ENCODE measurements at regions of chr7 and their contacts with region 1.

Region 1: DNA sequence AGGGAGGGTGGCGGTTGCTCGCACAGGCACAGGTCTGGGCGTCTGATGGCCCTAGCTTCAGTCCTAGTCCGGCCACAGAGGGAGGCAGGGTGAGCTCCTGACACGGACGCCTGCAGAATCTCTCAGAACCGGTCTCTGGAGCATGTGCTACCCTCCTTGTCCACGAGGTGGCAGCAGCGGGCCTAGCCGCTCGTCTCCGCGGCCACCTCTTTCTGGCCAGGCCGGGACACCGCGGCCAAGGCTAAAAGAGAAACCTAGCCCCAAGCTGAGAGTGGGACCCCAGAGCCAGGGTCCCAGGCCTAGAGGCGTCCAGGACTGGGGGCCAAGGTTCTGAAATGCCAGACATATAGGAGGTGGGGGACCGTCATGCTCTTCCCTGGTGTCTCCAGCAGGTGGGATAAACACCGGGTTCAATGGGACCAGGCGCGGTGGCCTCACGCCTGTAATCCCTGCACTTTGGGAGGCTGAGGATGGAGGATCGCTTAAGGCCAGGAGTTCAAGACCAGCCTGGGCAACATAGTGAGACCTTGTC is 3.2 kb upstream of the LAT2 start:
- DNase-seq: peak; percentile 82 to 93
- H3K4me3 ChIP-seq: no peak overlapping the region
- H3K4me3 Mint-ChIP-seq: no peak overlapping the region
- H3K27ac Mint-ChIP-seq: no peak overlapping the region
- H3K4me1 ChIP-seq: no peaks in the 10 kb centered on the region
- H3K4me1 Mint-ChIP-seq: no peaks in the 10 kb centered on the region
- H3K27me3 ChIP-seq: no peaks in the 10 kb centered on the region
- H3K27me3 Mint-ChIP-seq: peaks cover 6% of the 10 kb centered on the region
- CTCF ChIP-seq: peak; percentile 95 to 97

Region 2: DNA sequence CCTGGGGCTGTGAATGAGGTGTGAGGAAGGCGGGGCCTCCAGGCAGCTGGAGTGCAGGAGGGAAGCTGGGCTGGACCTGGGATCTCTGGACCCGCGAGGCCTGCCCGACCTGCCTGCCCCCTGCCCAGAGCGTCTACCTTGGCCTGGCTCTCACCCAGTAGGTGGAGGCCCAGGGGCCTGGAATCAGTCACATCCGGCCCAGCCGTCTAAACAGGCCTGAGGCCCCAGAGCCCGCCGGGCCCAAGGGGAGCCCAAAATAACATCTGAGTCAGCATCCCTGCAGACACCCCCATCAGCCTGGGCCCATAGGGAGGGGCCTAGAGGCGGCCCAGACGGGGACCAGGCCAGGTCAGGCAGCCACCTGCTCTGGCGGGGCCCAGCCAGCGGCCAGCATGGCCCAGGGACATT is 193.8 kb before region 1 on chr7:
- CTCF ChIA-PET with region 1: no interaction called
- POLR2A ChIA-PET with region 1: no interaction called
- intact Hi-C with region 1: no loop called
- DNase-seq: no peak
- H3K4me3 ChIP-seq: no peak overlapping the region
- H3K4me3 Mint-ChIP-seq: no peak overlapping the region
- H3K27ac Mint-ChIP-seq: no peak overlapping the region
- H3K4me1 ChIP-seq: no peaks in the 10 kb centered on the region
- H3K4me1 Mint-ChIP-seq: no peaks in the 10 kb centered on the region
- H3K27me3 ChIP-seq: no peaks in the 10 kb centered on the region
- H3K27me3 Mint-ChIP-seq: peaks cover 4% of the 10 kb centered on the region
- CTCF ChIP-seq: no peak

Region 3: DNA sequence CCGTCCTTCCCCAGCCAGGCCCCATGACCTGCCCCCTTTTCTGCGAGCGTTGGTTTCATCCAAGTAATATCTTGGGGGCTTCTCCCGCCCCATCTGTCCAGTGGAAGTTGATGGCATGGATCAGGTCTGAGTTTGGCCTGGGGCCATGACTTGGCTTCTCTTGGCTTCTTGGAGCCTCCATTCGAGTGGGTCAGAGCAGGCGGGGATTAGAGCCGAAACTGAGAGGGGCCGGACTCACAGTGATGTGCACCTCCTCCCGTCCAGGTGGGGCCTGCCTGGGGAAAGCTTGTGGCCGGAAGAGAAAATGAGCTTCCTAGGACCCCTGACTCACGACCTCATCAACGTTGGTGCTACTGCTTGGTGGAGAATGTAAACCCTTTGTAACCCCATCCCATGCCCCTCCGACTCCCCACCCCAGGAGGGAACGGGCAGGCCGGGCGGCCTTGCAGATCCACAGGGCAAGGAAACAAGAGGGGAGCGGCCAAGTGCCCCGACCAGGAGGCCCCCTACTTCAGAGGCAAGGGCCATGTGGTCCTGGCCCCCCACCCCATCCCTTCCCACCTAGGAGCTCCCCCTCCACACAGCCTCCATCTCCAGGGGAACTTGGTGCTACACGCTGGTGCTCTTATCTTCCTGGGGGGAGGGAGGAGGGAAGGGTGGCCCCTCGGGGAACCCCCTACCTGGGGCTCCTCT is 138.1 kb before region 1 on chr7:
- CTCF ChIA-PET with region 1: interaction called, 6 read pairs
- POLR2A ChIA-PET with region 1: no interaction called
- intact Hi-C with region 1: loop called (anchors 1 kb)
- DNase-seq: no peak
- H3K4me3 ChIP-seq: no peak overlapping the region
- H3K4me3 Mint-ChIP-seq: no peak overlapping the region
- H3K27ac Mint-ChIP-seq: no peak overlapping the region
- H3K4me1 ChIP-seq: no peaks in the 10 kb centered on the region
- H3K4me1 Mint-ChIP-seq: no peaks in the 10 kb centered on the region
- H3K27me3 ChIP-seq: no peaks in the 10 kb centered on the region
- H3K27me3 Mint-ChIP-seq: no peaks in the 10 kb centered on the region
- CTCF ChIP-seq: no peak

Region 4: DNA sequence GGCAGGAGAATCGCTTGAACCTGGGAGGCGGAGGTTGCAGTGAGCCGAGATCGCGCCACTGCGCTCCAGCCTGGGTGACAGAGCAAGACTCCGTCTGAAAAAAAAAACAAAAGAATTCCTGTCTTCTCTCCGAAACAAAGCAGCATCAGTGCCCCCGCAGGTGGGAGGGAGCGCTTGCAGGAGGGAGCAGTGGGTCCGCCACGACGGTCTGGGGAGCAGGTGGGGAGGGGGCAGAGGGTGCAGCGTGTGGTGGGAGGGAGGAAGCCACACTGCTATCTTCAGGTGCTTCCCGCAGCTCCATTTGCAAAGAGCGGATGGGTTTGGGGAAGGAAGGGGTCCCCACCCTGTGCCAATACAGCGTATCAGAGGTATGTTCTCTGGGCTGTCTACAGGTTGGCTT is 91.3 kb before region 1 on chr7:
- CTCF ChIA-PET with region 1: no interaction called
- POLR2A ChIA-PET with region 1: no interaction called
- intact Hi-C with region 1: no loop called
- DNase-seq: peak in 1 of 2 experiments; percentile 29
- H3K4me3 ChIP-seq: no peak overlapping the region
- H3K4me3 Mint-ChIP-seq: no peak overlapping the region
- H3K27ac Mint-ChIP-seq: no peak overlapping the region
- H3K4me1 ChIP-seq: no peaks in the 10 kb centered on the region
- H3K4me1 Mint-ChIP-seq: no peaks in the 10 kb centered on the region
- H3K27me3 ChIP-seq: no peaks in the 10 kb centered on the region
- H3K27me3 Mint-ChIP-seq: no peaks in the 10 kb centered on the region
- CTCF ChIP-seq: peak in 1 of 2 experiments; percentile 9

Region 5: DNA sequence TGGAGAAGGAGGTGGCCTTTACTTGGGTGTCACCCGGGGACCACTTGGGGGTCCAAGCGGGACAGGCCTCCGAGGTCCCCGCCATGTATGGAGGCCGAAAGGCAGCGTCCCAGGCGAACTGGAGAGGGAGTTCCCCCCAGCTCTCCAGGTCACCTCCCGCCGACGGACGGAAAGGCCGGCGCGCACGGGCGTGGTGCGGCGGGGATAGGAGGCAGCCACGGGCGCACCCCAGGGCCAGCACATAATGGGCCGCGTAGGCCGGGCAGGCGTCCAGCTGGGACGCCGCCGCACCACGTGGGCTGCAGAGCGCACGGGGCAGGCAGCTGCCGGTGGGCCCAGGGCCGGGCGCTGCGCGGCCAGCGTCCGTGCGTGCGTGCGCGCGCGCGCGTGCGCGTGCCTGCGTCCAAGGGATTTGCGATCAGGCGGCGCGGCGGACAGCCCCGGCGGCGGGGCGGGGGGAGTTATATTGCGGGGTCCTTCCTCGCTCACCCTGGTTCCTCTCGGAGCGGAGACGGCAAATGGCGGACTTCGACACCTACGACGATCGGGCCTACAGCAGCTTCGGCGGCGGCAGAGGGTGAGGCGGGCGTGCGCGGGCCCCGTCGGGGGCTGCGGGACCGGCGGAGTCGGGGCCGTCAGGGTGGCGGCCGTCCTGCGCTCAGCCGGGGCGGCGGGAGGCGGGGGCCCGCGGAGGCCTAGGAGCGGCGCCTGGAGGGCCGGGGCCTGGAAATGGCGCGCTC is 32.6 kb before region 1 on chr7 and contains the start of gene EIF4H:
- CTCF ChIA-PET with region 1: interaction called, 10 read pairs
- POLR2A ChIA-PET with region 1: no interaction called
- intact Hi-C with region 1: loop called (anchors 2 kb)
- DNase-seq: peak; percentile 93 to 97
- H3K4me3 ChIP-seq: peak within 1 kb of the TSS; percentile 99
- H3K4me3 Mint-ChIP-seq: peak within 1 kb of the TSS; percentile 94
- H3K27ac Mint-ChIP-seq: peak within 1 kb of the TSS; percentile 90
- H3K4me1 ChIP-seq: peaks cover 13% of the 10 kb centered on the region; the same call in 1 of the 2 replicates
- H3K4me1 Mint-ChIP-seq: peaks cover 17% of the 10 kb centered on the region
- H3K27me3 ChIP-seq: no peaks in the 10 kb centered on the region
- H3K27me3 Mint-ChIP-seq: no peaks in the 10 kb centered on the region
- CTCF ChIP-seq: no peak
- total RNA-seq, gene EIF4H: 370 TPM in 2 replicates

Region 6: GRCh38 chr7:74193054-74193453 is 13.6 kb before region 1 on chr7:
- CTCF ChIA-PET with region 1: interaction called, 10 read pairs
- POLR2A ChIA-PET with region 1: interaction called, 10 read pairs
- intact Hi-C with region 1: no loop called
- DNase-seq: no peak
- H3K4me3 ChIP-seq: no peak overlapping the region
- H3K4me3 Mint-ChIP-seq: no peak overlapping the region
- H3K27ac Mint-ChIP-seq: no peak overlapping the region
- H3K4me1 ChIP-seq: no peaks in the 10 kb centered on the region
- H3K4me1 Mint-ChIP-seq: no peaks in the 10 kb centered on the region
- H3K27me3 ChIP-seq: no peaks in the 10 kb centered on the region
- H3K27me3 Mint-ChIP-seq: no peaks in the 10 kb centered on the region
- CTCF ChIP-seq: no peak

Region 7: DNA sequence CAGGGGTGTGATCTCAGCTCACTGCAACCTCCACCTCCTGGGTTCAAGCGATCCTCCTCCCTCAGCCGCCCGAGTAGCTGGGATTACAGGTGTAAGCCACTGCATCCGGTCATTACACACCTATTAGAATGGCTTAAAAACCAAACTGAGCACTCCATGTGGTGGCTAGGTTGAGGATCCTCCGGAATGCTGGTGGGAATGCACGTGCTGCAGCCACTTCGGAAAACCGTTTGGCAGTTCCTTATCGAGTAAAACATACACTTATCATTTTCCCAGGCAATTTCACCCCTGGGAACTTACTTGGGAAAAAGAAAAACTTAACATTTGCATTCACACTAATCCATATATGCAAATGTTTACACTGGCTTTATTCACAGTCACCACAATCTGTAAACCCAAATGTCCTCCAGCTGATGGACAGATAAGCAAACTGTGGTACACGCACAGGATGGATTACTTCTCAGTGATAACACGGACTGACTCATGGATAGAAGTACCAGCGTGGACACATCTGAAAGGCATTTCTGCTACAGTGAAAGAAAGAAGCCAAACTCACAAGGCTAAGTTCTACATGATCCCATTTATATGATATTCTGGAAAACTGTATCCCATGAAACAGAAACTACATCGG is 27.1 kb after region 1 on chr7:
- CTCF ChIA-PET with region 1: interaction called, 3 read pairs
- POLR2A ChIA-PET with region 1: no interaction called
- intact Hi-C with region 1: loop called (anchors 1 kb)
- DNase-seq: no peak
- H3K4me3 ChIP-seq: no peak overlapping the region
- H3K4me3 Mint-ChIP-seq: no peak overlapping the region
- H3K27ac Mint-ChIP-seq: no peak overlapping the region
- H3K4me1 ChIP-seq: no peaks in the 10 kb centered on the region; the same call in 1 of the 2 replicates
- H3K4me1 Mint-ChIP-seq: peaks cover 11% of the 10 kb centered on the region
- H3K27me3 ChIP-seq: no peaks in the 10 kb centered on the region
- H3K27me3 Mint-ChIP-seq: no peaks in the 10 kb centered on the region
- CTCF ChIP-seq: no peak

Region 8: GRCh38 chr7:74289018-74289658 is 82.5 kb after region 1 on chr7 and contains the start of gene CLIP2:
- CTCF ChIA-PET with region 1: interaction called, 10 read pairs
- POLR2A ChIA-PET with region 1: no interaction called
- intact Hi-C with region 1: no loop called
- DNase-seq: peak; percentile 80 to 84
- H3K4me3 ChIP-seq: peak within 1 kb of the TSS; percentile 76
- H3K4me3 Mint-ChIP-seq: peak within 1 kb of the TSS; percentile 71
- H3K27ac Mint-ChIP-seq: peak within 1 kb of the TSS; percentile 38
- H3K4me1 ChIP-seq: peaks cover 56% of the 10 kb centered on the region
- H3K4me1 Mint-ChIP-seq: peaks cover 23% of the 10 kb centered on the region
- H3K27me3 ChIP-seq: no peaks in the 10 kb centered on the region
- H3K27me3 Mint-ChIP-seq: no peaks in the 10 kb centered on the region
- CTCF ChIP-seq: no peak
- total RNA-seq, gene CLIP2: 19.5 and 23.5 TPM in 2 replicates

Region 9: GRCh38 chr7:74401137-74401859 is 194.6 kb after region 1 on chr7:
- CTCF ChIA-PET with region 1: interaction called, 76 read pairs
- POLR2A ChIA-PET with region 1: interaction called, 3 read pairs
- intact Hi-C with region 1: loop called (anchors 1 kb)
- DNase-seq: peak; percentile 76 to 83
- H3K4me3 ChIP-seq: no peak overlapping the region
- H3K4me3 Mint-ChIP-seq: no peak overlapping the region
- H3K27ac Mint-ChIP-seq: no peak overlapping the region
- H3K4me1 ChIP-seq: no peaks in the 10 kb centered on the region
- H3K4me1 Mint-ChIP-seq: no peaks in the 10 kb centered on the region
- H3K27me3 ChIP-seq: no peaks in the 10 kb centered on the region
- H3K27me3 Mint-ChIP-seq: no peaks in the 10 kb centered on the region
- CTCF ChIP-seq: peak; percentile 97

Measured in Caco-2 (cell line).